ENCODE measurements at regions of chr11 and their contacts with region 1.

Region 1: GRCh38 chr11:36564376-36565030 is 3.3 kb upstream of the RAG1 start:
- DNase-seq: peak; percentile 68
- ATAC-seq: peak; percentile 78
- H3K4me3 Mint-ChIP-seq: peak overlapping the region; percentile 31
- H3K27ac Mint-ChIP-seq: no peak overlapping the region
- H3K4me1 Mint-ChIP-seq: peaks cover 7% of the 10 kb centered on the region
- H3K27me3 Mint-ChIP-seq: peaks cover 47% of the 10 kb centered on the region

Region 2: DNA sequence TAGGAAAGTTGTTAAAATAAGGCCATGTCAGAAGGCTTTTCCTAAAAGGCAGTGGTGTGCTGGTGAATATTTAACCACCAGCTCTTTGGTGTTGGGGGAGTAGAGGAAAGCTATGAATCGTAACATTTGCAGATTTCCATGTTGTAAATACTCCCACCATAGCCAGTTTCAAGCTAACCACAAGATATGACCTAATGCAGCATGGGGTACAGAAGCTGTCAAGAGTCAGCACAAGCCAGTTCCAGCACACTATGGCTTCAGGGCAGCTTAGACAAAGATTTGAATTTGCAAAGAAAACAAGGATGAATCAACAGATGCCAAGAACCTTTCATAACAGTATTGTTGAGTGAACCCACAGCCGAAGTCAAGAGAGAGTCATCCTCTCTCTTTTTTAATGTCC is 315.3 kb before region 1 on chr11:
- CTCF ChIA-PET with region 1: no interaction called
- POLR2A ChIA-PET with region 1: no interaction called
- DNase-seq: no peak
- ATAC-seq: no peak
- H3K4me3 Mint-ChIP-seq: no peak overlapping the region
- H3K27ac Mint-ChIP-seq: no peak overlapping the region
- H3K4me1 Mint-ChIP-seq: no peaks in the 10 kb centered on the region
- H3K27me3 Mint-ChIP-seq: peaks cover 18% of the 10 kb centered on the region

Region 3: GRCh38 chr11:36532941-36533601 is 31.4 kb before region 1 on chr11:
- CTCF ChIA-PET with region 1: no interaction called
- POLR2A ChIA-PET with region 1: no interaction called
- DNase-seq: no peak
- ATAC-seq: no peak
- H3K4me3 Mint-ChIP-seq: no peak overlapping the region
- H3K27ac Mint-ChIP-seq: no peak overlapping the region
- H3K4me1 Mint-ChIP-seq: no peaks in the 10 kb centered on the region
- H3K27me3 Mint-ChIP-seq: peaks cover 19% of the 10 kb centered on the region

Region 4: GRCh38 chr11:36577859-36578258 is 13.4 kb after region 1 on chr11:
- CTCF ChIA-PET with region 1: interaction called, 21 read pairs
- POLR2A ChIA-PET with region 1: no interaction called
- DNase-seq: no peak
- ATAC-seq: no peak
- H3K4me3 Mint-ChIP-seq: no peak overlapping the region
- H3K27ac Mint-ChIP-seq: no peak overlapping the region
- H3K4me1 Mint-ChIP-seq: no peaks in the 10 kb centered on the region
- H3K27me3 Mint-ChIP-seq: peaks cover 5% of the 10 kb centered on the region

Region 5: GRCh38 chr11:36672813-36673450 is 108.4 kb after region 1 on chr11:
- CTCF ChIA-PET with region 1: interaction called, 26 read pairs
- POLR2A ChIA-PET with region 1: no interaction called
- DNase-seq: peak; percentile 26
- ATAC-seq: no peak
- H3K4me3 Mint-ChIP-seq: no peak overlapping the region
- H3K27ac Mint-ChIP-seq: no peak overlapping the region
- H3K4me1 Mint-ChIP-seq: no peaks in the 10 kb centered on the region
- H3K27me3 Mint-ChIP-seq: peaks cover 3% of the 10 kb centered on the region

Region 6: DNA sequence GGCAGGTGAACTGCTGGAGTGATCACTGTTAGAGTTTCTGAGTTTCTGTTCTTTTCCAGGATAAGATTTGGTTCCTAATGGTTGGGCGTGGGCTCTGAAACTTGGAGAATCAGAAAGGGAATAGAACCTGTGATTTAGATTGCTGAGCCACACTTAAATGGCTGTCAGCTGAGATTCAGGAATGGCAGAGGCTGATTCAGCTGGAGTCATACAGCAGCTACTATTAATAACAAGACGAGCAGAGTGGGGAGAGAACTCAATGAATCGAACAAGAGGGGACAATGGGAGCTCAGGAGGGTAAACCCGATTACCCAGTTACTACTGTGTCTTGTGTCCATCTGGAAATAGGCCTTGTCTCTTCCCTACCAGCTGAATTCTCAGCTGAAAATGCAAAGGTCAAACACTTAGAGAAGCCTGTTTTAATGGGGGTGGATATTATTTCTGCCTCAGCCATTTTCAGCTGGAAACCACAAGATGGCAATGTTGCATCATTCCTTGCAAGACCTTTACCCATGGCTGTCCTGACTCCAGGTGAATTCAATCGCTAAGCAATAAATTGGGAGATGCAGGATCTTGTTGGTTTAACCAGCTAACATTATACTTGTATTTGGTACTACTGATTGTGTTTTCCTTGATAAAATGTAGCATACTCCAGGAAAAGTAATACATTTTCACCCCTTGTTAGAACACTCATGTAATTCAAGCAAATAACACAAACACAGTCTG is 138.0 kb after region 1 on chr11:
- CTCF ChIA-PET with region 1: interaction called, 24 read pairs
- POLR2A ChIA-PET with region 1: no interaction called
- DNase-seq: no peak
- ATAC-seq: no peak
- H3K4me3 Mint-ChIP-seq: no peak overlapping the region
- H3K27ac Mint-ChIP-seq: no peak overlapping the region
- H3K4me1 Mint-ChIP-seq: no peaks in the 10 kb centered on the region
- H3K27me3 Mint-ChIP-seq: peaks cover 9% of the 10 kb centered on the region

Region 7: GRCh38 chr11:36738292-36738861 is 173.9 kb after region 1 on chr11:
- CTCF ChIA-PET with region 1: interaction called, 37 read pairs
- POLR2A ChIA-PET with region 1: no interaction called
- DNase-seq: no peak
- ATAC-seq: no peak
- H3K4me3 Mint-ChIP-seq: no peak overlapping the region
- H3K27ac Mint-ChIP-seq: no peak overlapping the region
- H3K4me1 Mint-ChIP-seq: peaks cover 6% of the 10 kb centered on the region
- H3K27me3 Mint-ChIP-seq: peaks cover 17% of the 10 kb centered on the region

Measured in activated CD8-positive, alpha-beta T cell treated with anti-CD3 and anti-CD28 coated beads, Interleukin-2, amount 10 ng/mL, durations not matched to agents 7 days and 5 days (primary cell).